ENCODE measurements at regions of chr17 and their contacts with region 1.

Region 1: DNA sequence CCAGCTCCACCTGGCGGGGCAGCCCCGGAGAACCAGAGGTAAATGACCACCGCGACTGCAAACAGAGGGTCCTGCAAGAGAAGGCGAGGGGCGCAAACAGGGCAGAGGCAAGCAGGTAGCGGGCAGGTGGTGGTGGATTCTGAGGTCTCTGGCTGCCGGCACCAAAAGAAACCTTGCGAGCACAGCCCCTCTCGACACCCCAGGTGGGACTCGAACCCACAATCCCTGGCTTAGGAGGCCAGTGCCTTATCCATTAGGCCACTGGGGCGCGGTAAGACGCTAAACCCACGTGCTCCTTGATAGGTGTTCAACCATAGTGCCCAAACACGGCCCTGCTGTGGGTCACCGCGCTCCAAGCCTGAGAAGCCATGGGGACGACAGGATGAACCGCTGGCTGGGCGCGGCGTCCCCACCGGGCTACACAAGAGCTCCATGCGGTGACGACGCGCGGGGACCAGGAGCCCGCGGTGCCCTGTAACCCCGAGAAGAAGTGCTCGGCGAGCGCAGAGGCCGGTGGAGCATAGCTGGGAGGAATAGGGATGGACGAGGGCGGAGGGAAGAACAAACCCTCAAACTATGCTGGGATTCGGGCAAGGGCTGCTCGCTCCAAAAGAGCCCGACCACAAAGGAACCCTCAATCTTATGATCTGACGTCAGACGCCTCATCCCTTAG is 12.4 kb downstream of the ATP5PD start:
- H3K4me3 ChIP-seq: peak overlapping the region; percentile 60
- H3K27ac ChIP-seq: peak overlapping the region; percentile 94
- H3K4me1 ChIP-seq: peaks cover 19% of the 10 kb centered on the region
- CTCF ChIP-seq: peak; percentile 51

Region 2: GRCh38 chr17:74972107-74972972 is 62.0 kb before region 1 on chr17 and contains the start of gene HID1:
- CTCF ChIA-PET with region 1: interaction called, 3 read pairs
- POLR2A ChIA-PET with region 1: interaction called, 19 read pairs
- H3K4me3 ChIP-seq: peak within 1 kb of the TSS; percentile 74
- H3K27ac ChIP-seq: peak within 1 kb of the TSS; percentile 60; the same call in 1 of the 2 replicates
- H3K4me1 ChIP-seq: peaks cover 4% of the 10 kb centered on the region; the same call in 1 of the 2 replicates
- CTCF ChIP-seq: no peak; the same call in 1 of the 2 replicates

Region 3: GRCh38 chr17:74981979-74982662 is 52.3 kb before region 1 on chr17:
- CTCF ChIA-PET with region 1: interaction called, 3 read pairs
- POLR2A ChIA-PET with region 1: interaction called, 25 read pairs
- H3K4me3 ChIP-seq: peak overlapping the region; percentile 56
- H3K27ac ChIP-seq: peak overlapping the region; percentile 79
- H3K4me1 ChIP-seq: peaks cover 3% of the 10 kb centered on the region; the same call in 1 of the 2 replicates
- CTCF ChIP-seq: peak; percentile 80; the same call in 1 of the 2 replicates

Region 4: GRCh38 chr17:74987418-74987908 is 46.9 kb before region 1 on chr17 and contains the start of gene CDR2L:
- CTCF ChIA-PET with region 1: interaction called, 4 read pairs
- POLR2A ChIA-PET with region 1: interaction called, 25 read pairs
- H3K4me3 ChIP-seq: peak within 1 kb of the TSS; percentile 81
- H3K27ac ChIP-seq: peak within 1 kb of the TSS; percentile 88; the same call in 1 of the 2 replicates
- H3K4me1 ChIP-seq: peaks cover 3% of the 10 kb centered on the region; the same call in 1 of the 2 replicates
- CTCF ChIP-seq: no peak

Region 5: DNA sequence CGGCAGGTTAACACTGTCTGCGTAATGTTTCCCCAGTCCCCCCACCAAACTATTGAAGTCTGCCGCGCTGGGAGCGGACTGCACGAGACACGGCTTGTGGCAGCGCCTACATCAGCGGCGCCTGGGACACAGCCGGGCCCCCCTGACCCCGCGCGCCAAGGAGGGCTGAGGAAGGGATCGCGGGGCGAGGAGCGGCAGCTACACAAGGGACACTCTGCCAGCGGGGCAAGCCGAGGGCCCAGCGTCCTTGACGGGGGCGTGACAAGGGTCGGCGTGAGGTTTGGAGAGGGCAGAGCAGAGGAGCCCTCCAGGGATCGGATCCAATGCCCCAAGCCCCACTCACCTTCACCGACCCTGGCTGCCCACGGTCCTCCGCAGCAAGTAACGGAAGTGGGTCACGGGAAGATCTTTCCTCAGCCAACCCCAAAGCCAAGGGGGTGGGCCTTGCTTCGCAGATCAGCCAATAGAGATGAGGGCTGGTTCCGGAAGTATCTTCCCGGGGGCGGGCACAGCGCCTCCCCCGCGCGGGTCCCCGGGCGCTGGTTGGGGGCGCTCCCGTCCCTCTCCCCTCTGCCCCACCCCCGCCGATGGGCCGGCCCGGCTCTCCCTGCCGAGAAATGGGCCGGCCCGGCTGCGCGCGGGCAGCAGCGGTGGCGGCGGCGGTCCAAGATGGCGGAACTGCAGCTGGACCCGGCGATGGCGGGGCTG is 12.4 kb after region 1 on chr17 and contains the starts of genes ATP5PD and KCTD2:
- CTCF ChIA-PET with region 1: interaction called, 3 read pairs
- POLR2A ChIA-PET with region 1: interaction called, 44 read pairs
- H3K4me3 ChIP-seq: peak within 1 kb of the TSS; percentile 99
- H3K27ac ChIP-seq: peak within 1 kb of the TSS; percentile 92
- H3K4me1 ChIP-seq: peaks cover 8% of the 10 kb centered on the region; the same call in 1 of the 2 replicates
- CTCF ChIP-seq: 0 out of 2 replicates have a peak, but pooled peaks have one; percentile 45

Region 6: GRCh38 chr17:75077496-75078283 is 43.3 kb after region 1 on chr17:
- CTCF ChIA-PET with region 1: no interaction called
- POLR2A ChIA-PET with region 1: no interaction called
- H3K4me3 ChIP-seq: no peak overlapping the region
- H3K27ac ChIP-seq: no peak overlapping the region
- H3K4me1 ChIP-seq: peaks cover 2% of the 10 kb centered on the region; the same call in 1 of the 2 replicates
- CTCF ChIP-seq: no peak

Region 7: GRCh38 chr17:75978938-75979704 is 944.7 kb after region 1 on chr17 and contains the starts of genes ACOX1 and TEN1:
- CTCF ChIA-PET with region 1: no interaction called
- POLR2A ChIA-PET with region 1: interaction called, 12 read pairs
- H3K4me3 ChIP-seq: peak within 1 kb of the TSS; percentile 77
- H3K27ac ChIP-seq: peak within 1 kb of the TSS; percentile 96
- H3K4me1 ChIP-seq: peaks cover 24% of the 10 kb centered on the region
- CTCF ChIP-seq: peak; percentile 83